Gastrocnemius medialis (tissue), 4 donors: ENCODE measurements at regions of chr19 and their contacts with region 1.

Region 1: DNA sequence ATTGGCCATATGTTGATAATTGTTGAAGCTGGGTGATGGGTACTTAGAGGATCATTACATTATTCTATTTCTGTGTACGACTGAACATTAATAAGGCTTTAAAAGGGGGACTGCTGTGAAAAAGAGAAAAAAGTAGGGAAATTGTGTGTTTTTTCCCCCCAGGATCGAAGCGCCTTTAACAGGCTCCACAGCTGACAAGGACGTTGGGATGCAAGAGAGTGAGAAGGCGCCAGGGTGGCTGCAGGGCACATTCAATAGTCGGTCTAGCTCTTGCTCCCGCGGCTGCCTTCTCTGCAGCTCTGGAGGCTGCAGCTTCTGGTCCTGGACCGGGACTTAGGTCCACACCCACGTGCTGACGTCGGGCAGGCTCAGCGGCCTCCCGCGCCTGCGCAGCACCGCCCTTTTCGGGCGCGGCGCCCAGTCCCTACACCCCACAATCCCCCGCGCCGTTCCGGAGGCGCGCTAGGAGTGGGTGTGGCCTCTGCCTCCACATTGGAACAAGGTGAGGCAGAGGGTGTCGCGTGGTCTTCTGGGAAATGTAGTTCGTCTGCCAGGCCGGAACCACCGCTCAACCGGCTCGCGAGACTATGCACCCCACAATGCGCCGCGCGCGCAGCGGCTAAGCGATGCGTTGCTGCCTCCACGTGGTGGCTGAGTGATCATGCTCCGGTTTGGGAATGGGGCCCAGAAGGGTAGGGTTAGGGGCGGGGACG is 4.9 kb upstream of the LRFN3 start:
- DNase-seq: peak; percentile 99
- ATAC-seq: peak; percentile 98 to 99
- H3K4me3 ChIP-seq: peak overlapping the region; percentile 39 to 50 (median 46)
- H3K27ac ChIP-seq: peak overlapping the region; percentile 66 to 74 (median 70)
- H3K4me1 ChIP-seq: peaks cover 12 to 20% of the 10 kb centered on the region in 2 donors
- H3K27me3 ChIP-seq: no peaks in the 10 kb centered on the region
- CTCF ChIP-seq: peak; percentile 77 to 94 (median 92)
- POLR2A ChIP-seq: peak; percentile 45 to 69

Region 2: GRCh38 chr19:35545001-35545911 is 386.1 kb before region 1 on chr19 and contains the start of gene TMEM147:
- in situ Hi-C with region 1: no loop called
- intact Hi-C with region 1: loop called (anchors 2 kb)
- DNase-seq: peak; percentile 87
- ATAC-seq: peak; percentile 91 to 92
- H3K4me3 ChIP-seq: peak within 1 kb of the TSS; percentile 71 to 90 (median 80)
- H3K27ac ChIP-seq: peak within 1 kb of the TSS; percentile 80 to 89 (median 87)
- H3K4me1 ChIP-seq: peaks cover 18 to 25% of the 10 kb centered on the region in 2 donors
- H3K27me3 ChIP-seq: no peaks in the 10 kb centered on the region
- CTCF ChIP-seq: no peak
- POLR2A ChIP-seq: peak; percentile 63 to 70
- total RNA-seq, gene TMEM147: 86.2 to 145 (median 119) TPM

Region 3: GRCh38 chr19:35693830-35694599 is 237.3 kb before region 1 on chr19:
- in situ Hi-C with region 1: no loop called
- intact Hi-C with region 1: loop called (anchors 1 kb)
- DNase-seq: peak; percentile 71 to 86
- ATAC-seq: peak; percentile 100
- H3K4me3 ChIP-seq: no peak overlapping the region
- H3K27ac ChIP-seq: no peak overlapping the region
- H3K4me1 ChIP-seq: no peaks in the 10 kb centered on the region
- H3K27me3 ChIP-seq: peaks cover 0 to 2% (median 0%) of the 10 kb centered on the region in 3 donors
- CTCF ChIP-seq: peak; percentile 94 to 98 (median 97)
- POLR2A ChIP-seq: no peak

Region 4: GRCh38 chr19:35740423-35741202 is 190.7 kb before region 1 on chr19:
- in situ Hi-C with region 1: no loop called
- intact Hi-C with region 1: loop called (anchors 1 kb)
- DNase-seq: peak; percentile 96 to 98
- ATAC-seq: peak; percentile 74
- H3K4me3 ChIP-seq: peak overlapping the region; percentile 52 to 88 (median 78)
- H3K27ac ChIP-seq: peak overlapping the region; percentile 77 to 86 (median 82)
- H3K4me1 ChIP-seq: peaks cover 20 to 26% of the 10 kb centered on the region in 2 donors
- H3K27me3 ChIP-seq: no peaks in the 10 kb centered on the region
- CTCF ChIP-seq: peak in 3 of 5 experiments; percentile 9 to 34 (median 24)
- POLR2A ChIP-seq: peak in 1 of 2 donors; percentile 56

Region 5: GRCh38 chr19:35882114-35882832 is 49.0 kb before region 1 on chr19:
- in situ Hi-C with region 1: loop called in 1 of 4 experiments (anchors 10 kb)
- intact Hi-C with region 1: loop called (anchors 1 kb)
- DNase-seq: no peak
- ATAC-seq: peak in 1 of 2 donors; percentile 63
- H3K4me3 ChIP-seq: no peak overlapping the region
- H3K27ac ChIP-seq: no peak overlapping the region
- H3K4me1 ChIP-seq: no peaks in the 10 kb centered on the region
- H3K27me3 ChIP-seq: peaks cover 0 to 9% (median 4%) of the 10 kb centered on the region in 3 donors
- CTCF ChIP-seq: peak in 4 of 5 experiments; percentile 17 to 44 (median 28)
- POLR2A ChIP-seq: no peak

Region 6: DNA sequence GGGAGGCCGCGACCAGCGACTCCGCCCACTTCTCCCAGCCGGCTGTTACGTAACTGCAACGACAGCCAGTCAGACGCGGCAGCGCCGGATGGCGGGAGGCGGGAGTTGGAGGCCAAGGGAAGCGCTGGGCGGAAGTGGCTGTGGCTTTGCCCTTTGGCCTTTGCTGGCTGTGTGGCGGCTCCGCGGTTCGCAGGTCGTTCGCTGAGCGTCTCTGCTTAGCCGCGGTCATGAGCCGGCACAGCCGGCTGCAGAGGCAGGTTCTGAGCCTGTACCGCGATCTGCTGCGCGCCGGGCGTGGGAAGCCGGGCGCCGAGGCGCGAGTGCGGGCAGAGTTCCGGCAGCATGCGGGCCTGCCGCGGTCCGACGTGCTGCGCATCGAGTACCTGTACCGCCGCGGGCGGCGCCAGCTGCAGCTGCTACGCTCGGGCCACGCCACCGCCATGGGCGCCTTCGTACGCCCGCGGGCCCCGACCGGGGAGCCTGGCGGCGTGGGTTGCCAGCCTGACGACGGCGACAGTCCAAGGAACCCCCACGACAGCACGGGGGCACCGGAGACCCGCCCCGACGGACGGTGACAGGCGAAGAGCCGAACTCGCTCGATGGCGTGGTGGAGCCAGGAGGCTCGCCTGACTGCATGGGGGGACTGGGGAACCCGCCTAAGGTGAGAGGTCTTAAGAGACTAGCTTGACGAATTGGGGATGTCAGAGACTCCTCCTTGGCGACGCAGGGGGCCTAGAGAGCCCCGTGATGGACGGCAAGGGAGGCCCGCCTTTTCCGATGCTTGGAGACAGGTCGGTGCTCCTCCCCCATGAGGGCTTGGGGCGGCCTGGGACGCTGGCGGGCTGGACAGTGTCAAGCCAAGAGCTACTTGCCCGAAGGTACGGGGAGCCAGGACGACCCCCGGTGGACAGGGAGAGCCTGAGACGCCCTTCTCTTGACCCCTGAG is 64.0 kb after region 1 on chr19 and contains the start of gene SDHAF1:
- in situ Hi-C with region 1: no loop called
- intact Hi-C with region 1: loop called (anchors 1 kb)
- DNase-seq: peak; percentile 96
- ATAC-seq: peak; percentile 96 to 97
- H3K4me3 ChIP-seq: peak within 1 kb of the TSS; percentile 53 to 92 (median 78)
- H3K27ac ChIP-seq: peak within 1 kb of the TSS; percentile 78 to 91 (median 84)
- H3K4me1 ChIP-seq: peaks cover 24 to 31% of the 10 kb centered on the region in 2 donors
- H3K27me3 ChIP-seq: no peaks in the 10 kb centered on the region
- CTCF ChIP-seq: no peak
- POLR2A ChIP-seq: peak in 1 of 2 donors; percentile 73
- total RNA-seq, gene SDHAF1: 42.8 to 54.9 (median 49.9) TPM

Region 7: GRCh38 chr19:36214386-36215275 is 283.3 kb after region 1 on chr19 and contains the starts of genes ZNF146 and ZNF565:
- in situ Hi-C with region 1: no loop called
- intact Hi-C with region 1: loop called (anchors 10 kb)
- DNase-seq: peak; percentile 96 to 98
- ATAC-seq: peak; percentile 98
- H3K4me3 ChIP-seq: peak within 1 kb of the TSS; percentile 76 to 93 (median 77)
- H3K27ac ChIP-seq: peak within 1 kb of the TSS; percentile 89 to 98 (median 96)
- H3K4me1 ChIP-seq: peaks cover 28 to 29% of the 10 kb centered on the region in 2 donors
- H3K27me3 ChIP-seq: no peaks in the 10 kb centered on the region
- CTCF ChIP-seq: peak in 1 of 5 experiments; percentile 8
- POLR2A ChIP-seq: peak; percentile 78 to 87
- total RNA-seq, gene ZNF146: 47.8 to 108 (median 91.2) TPM
- total RNA-seq, gene ZNF565: 1.7 to 5.3 (median 2.3) TPM